Ovary (tissue), 10 donors: ENCODE measurements at regions of chr17 and their contacts with region 1.

Region 1: GRCh38 chr17:77531641-77532040 is 390.9 kb downstream of the SEC14L1 start:
- DNase-seq: no peak
- H3K4me3 ChIP-seq: no peak overlapping the region
- H3K27ac ChIP-seq: no peak overlapping the region
- H3K4me1 ChIP-seq: no peaks in the 10 kb centered on the region
- H3K27me3 ChIP-seq: no peaks in the 10 kb centered on the region
- CTCF ChIP-seq: no peak
- EP300 ChIP-seq: no peak
- POLR2A ChIP-seq: no peak

Region 2: DNA sequence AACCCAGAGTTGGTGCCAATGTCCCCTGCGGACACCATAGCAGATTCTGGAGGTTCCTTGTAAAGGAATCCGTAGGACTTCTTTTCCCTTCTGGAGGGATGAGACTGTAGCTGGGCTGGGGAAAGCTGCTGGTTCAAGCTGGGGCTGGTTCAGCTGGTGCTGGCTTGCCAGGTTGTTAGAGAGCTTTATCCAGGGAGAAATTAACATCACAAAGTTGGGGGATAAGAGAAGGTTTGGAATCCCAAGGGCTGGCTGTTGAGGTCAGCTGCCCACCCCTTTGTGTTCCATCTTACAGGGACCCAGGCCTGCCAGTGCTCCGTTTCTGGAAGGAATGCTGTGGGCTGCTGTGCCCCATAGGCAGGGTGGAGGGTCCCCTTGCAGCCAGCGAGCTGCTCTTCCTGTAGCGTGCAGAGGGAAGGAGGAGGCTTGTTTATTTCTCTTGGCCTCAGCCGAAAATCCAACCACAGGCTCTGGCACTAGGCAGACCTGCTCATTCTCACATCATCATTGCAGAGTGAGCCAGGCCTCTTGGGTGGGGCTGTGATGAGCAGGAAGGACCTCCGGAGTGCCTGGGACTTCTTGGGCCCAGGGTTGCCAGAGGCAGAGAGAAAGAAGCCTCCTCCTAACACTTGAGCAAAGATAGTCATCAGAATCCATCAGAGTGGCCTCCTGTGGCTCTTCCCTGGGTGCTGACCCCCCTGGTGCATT is 139.8 kb before region 1 on chr17:
- intact Hi-C with region 1: no loop called
- DNase-seq: peak in 4 of 5 donors; percentile 67 to 78 (median 72)
- H3K4me3 ChIP-seq: no peak overlapping the region
- H3K27ac ChIP-seq: peak overlapping the region in 1 of 2 donors; percentile 71
- H3K4me1 ChIP-seq: peaks cover 48% of the 10 kb centered on the region
- H3K27me3 ChIP-seq: no peaks in the 10 kb centered on the region
- CTCF ChIP-seq: no peak
- EP300 ChIP-seq: no peak
- POLR2A ChIP-seq: no peak

Region 3: GRCh38 chr17:77404812-77405581 is 126.6 kb before region 1 on chr17:
- intact Hi-C with region 1: no loop called
- DNase-seq: peak in 1 of 5 donors; percentile 36
- H3K4me3 ChIP-seq: no peak overlapping the region
- H3K27ac ChIP-seq: no peak overlapping the region
- H3K4me1 ChIP-seq: peaks cover 14% of the 10 kb centered on the region
- H3K27me3 ChIP-seq: no peaks in the 10 kb centered on the region
- CTCF ChIP-seq: no peak
- EP300 ChIP-seq: no peak
- POLR2A ChIP-seq: no peak

Region 4: GRCh38 chr17:77501101-77501566 is 30.5 kb before region 1 on chr17:
- intact Hi-C with region 1: no loop called
- DNase-seq: peak in 1 of 5 donors; percentile 35
- H3K4me3 ChIP-seq: no peak overlapping the region
- H3K27ac ChIP-seq: no peak overlapping the region
- H3K4me1 ChIP-seq: peaks cover 3% of the 10 kb centered on the region
- H3K27me3 ChIP-seq: no peaks in the 10 kb centered on the region
- CTCF ChIP-seq: no peak
- EP300 ChIP-seq: no peak
- POLR2A ChIP-seq: no peak

Region 5: GRCh38 chr17:77563439-77564102 is 31.9 kb after region 1 on chr17:
- intact Hi-C with region 1: loop called in 1 of 4 experiments (anchors 2 kb)
- DNase-seq: no peak
- H3K4me3 ChIP-seq: no peak overlapping the region
- H3K27ac ChIP-seq: no peak overlapping the region
- H3K4me1 ChIP-seq: no peaks in the 10 kb centered on the region
- H3K27me3 ChIP-seq: no peaks in the 10 kb centered on the region
- CTCF ChIP-seq: no peak
- EP300 ChIP-seq: no peak
- POLR2A ChIP-seq: no peak

Region 6: GRCh38 chr17:78899361-78900260 is 1368.0 kb after region 1 on chr17:
- intact Hi-C with region 1: no loop called
- DNase-seq: peak in 1 of 5 donors; percentile 55
- H3K4me3 ChIP-seq: no peak overlapping the region
- H3K27ac ChIP-seq: no peak overlapping the region
- H3K4me1 ChIP-seq: peaks cover 41% of the 10 kb centered on the region
- H3K27me3 ChIP-seq: no peaks in the 10 kb centered on the region
- CTCF ChIP-seq: no peak
- EP300 ChIP-seq: no peak
- POLR2A ChIP-seq: no peak